BJ (cell line): ENCODE measurements at regions of chr1 and their contacts with region 1.

Region 1: GRCh38 chr1:20430355-20431175 is 55.4 kb downstream of the CAMK2N1 start:
- DNase-seq: no peak
- H3K4me3 ChIP-seq: no peak overlapping the region
- H3K27me3 ChIP-seq: peaks cover 13% of the 10 kb centered on the region
- CTCF ChIP-seq: peak; percentile 83

Region 2: GRCh38 chr1:20185834-20186782 is 244.5 kb before region 1 on chr1 and contains the starts of genes PLA2G2C and UBXN10:
- CTCF ChIA-PET with region 1: no interaction called
- POLR2A ChIA-PET with region 1: no interaction called
- DNase-seq: no peak
- H3K4me3 ChIP-seq: no peak within 1 kb of the TSS
- H3K27me3 ChIP-seq: peaks cover 20% of the 10 kb centered on the region
- CTCF ChIP-seq: no peak
- polyA plus RNA-seq, gene PLA2G2C: not detected in 2 replicates
- polyA plus RNA-seq, gene UBXN10: not detected in 2 replicates

Region 3: GRCh38 chr1:20212685-20213331 is 217.8 kb before region 1 on chr1:
- CTCF ChIA-PET with region 1: interaction called, 11 read pairs
- POLR2A ChIA-PET with region 1: no interaction called
- DNase-seq: no peak
- H3K4me3 ChIP-seq: no peak overlapping the region
- H3K27me3 ChIP-seq: peaks cover 5% of the 10 kb centered on the region
- CTCF ChIP-seq: peak; percentile 84

Region 4: GRCh38 chr1:20376880-20377494 is 53.6 kb before region 1 on chr1:
- CTCF ChIA-PET with region 1: interaction called, 85 read pairs
- POLR2A ChIA-PET with region 1: no interaction called
- DNase-seq: no peak
- H3K4me3 ChIP-seq: no peak overlapping the region
- H3K27me3 ChIP-seq: peaks cover 4% of the 10 kb centered on the region; the same call in 1 of the 2 replicates
- CTCF ChIP-seq: peak; percentile 90

Region 5: DNA sequence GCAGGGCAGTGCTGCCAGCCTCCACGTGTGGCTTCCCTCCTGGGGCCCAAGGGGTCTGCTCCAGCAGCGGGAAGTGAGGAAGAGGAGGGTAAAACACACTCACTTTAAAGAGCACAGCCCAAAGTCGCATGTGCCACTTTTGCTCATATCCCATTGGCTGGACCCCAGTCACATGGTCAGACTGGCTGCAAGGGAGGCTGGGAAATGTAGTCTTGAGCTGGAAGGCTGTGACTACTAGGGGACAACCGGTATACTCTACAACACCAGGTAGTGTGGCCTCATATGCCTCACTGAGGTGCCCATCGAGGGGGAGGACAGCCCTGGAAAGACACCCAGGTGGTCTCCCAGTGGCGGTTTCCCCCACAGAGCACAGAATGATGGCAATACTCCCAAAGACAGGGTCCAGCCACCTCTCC is 10.2 kb after region 1 on chr1:
- CTCF ChIA-PET with region 1: interaction called, 14 read pairs
- POLR2A ChIA-PET with region 1: no interaction called
- DNase-seq: no peak
- H3K4me3 ChIP-seq: no peak overlapping the region
- H3K27me3 ChIP-seq: peaks cover 2% of the 10 kb centered on the region; the same call in 1 of the 2 replicates
- CTCF ChIP-seq: no peak

Region 6: GRCh38 chr1:20485527-20486456 is 55.2 kb after region 1 on chr1 and contains the start of gene CAMK2N1:
- CTCF ChIA-PET with region 1: interaction called, 10 read pairs
- POLR2A ChIA-PET with region 1: no interaction called
- DNase-seq: no peak
- H3K4me3 ChIP-seq: peak within 1 kb of the TSS; percentile 90
- H3K27me3 ChIP-seq: peaks cover 5% of the 10 kb centered on the region
- CTCF ChIP-seq: no peak
- polyA plus RNA-seq, gene CAMK2N1: 23.5 and 40.2 TPM in 2 replicates

Region 7: DNA sequence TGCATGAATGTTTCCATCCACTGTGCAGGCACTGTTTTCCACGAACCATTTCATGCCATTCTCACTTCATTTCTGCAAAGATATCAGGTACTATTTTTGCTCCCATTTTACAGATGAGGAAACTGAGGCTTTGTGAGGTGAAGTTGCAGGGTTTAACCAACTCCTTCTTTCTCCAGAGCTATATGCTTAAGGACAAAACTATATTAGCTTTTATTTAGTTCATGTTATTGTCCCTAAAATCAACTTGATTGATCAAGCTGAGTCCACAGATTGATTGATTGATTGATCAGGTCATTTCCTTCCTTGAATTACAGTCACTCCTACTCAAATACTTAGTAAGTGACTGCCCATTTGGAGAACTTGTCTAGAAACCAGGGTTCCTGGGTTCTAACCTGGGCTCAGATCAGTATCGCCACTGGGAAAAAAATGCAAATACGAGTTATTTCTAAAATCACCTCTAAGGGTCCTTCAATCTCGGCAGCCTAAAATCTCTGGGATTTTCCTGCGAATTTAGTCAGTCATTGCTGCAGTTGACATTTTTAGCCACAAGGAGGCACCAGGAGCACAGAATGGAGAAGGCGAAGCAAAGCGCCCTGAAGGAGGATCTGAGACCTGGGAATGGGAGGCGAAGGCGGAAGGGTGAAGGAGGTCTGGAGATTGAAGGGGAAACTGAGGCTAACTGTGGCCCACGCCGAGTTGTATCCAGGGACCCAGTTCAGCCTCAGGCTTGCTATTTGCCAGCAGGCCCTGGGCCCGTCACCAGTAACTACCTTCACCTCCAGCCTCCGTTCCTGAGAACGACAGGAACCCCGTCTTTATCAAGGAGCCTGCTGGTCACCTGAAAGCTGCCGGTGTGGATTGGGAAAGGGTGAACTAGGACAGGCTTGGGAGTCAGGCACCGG is 91.6 kb after region 1 on chr1:
- CTCF ChIA-PET with region 1: no interaction called
- POLR2A ChIA-PET with region 1: no interaction called
- DNase-seq: no peak
- H3K4me3 ChIP-seq: no peak overlapping the region
- H3K27me3 ChIP-seq: peaks cover 7% of the 10 kb centered on the region
- CTCF ChIP-seq: peak; percentile 92